ENCODE measurements at regions of chr3 and their contacts with region 1.

Region 1: DNA sequence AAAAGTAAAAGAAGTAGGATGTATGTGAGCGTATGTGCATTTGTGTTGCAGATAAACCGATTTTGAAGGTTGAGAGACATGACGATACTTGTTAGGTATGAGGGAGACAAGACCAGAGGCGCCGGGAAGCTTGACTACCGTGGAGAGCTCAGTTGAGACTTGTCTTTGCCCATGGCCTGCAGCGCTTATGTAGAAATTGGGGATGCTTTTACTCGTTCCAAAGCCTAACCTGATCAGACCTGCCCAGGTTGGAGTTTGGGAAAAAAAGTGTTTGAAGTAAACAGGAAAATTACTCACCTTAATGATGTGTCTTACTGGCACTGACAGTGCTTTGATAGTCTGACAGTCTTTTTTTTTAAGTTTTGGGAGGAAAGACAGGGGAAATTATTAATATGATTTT is 202.8 kb downstream of the TP63 start:
- DNase-seq: no peak
- ATAC-seq: no peak
- H3K4me3 ChIP-seq: no peak overlapping the region
- H3K27ac ChIP-seq: no peak overlapping the region
- H3K4me1 ChIP-seq: no peaks in the 10 kb centered on the region
- H3K27me3 ChIP-seq: no peaks in the 10 kb centered on the region; the same call in 1 of the 2 replicates
- CTCF ChIP-seq: no peak

Region 2: GRCh38 chr3:189851682-189852081 is 17.7 kb after region 1 on chr3:
- CTCF ChIA-PET with region 1: no interaction called
- POLR2A ChIA-PET with region 1: interaction called, 14 read pairs
- in situ Hi-C with region 1: no loop called
- intact Hi-C with region 1: no loop called
- DNase-seq: no peak
- ATAC-seq: no peak
- H3K4me3 ChIP-seq: no peak overlapping the region
- H3K27ac ChIP-seq: no peak overlapping the region
- H3K4me1 ChIP-seq: no peaks in the 10 kb centered on the region
- H3K27me3 ChIP-seq: no peaks in the 10 kb centered on the region
- CTCF ChIP-seq: no peak

Measured in Panc1 (cell line).